ENCODE measurements at regions of chr7 and their contacts with region 1.

Region 1: DNA sequence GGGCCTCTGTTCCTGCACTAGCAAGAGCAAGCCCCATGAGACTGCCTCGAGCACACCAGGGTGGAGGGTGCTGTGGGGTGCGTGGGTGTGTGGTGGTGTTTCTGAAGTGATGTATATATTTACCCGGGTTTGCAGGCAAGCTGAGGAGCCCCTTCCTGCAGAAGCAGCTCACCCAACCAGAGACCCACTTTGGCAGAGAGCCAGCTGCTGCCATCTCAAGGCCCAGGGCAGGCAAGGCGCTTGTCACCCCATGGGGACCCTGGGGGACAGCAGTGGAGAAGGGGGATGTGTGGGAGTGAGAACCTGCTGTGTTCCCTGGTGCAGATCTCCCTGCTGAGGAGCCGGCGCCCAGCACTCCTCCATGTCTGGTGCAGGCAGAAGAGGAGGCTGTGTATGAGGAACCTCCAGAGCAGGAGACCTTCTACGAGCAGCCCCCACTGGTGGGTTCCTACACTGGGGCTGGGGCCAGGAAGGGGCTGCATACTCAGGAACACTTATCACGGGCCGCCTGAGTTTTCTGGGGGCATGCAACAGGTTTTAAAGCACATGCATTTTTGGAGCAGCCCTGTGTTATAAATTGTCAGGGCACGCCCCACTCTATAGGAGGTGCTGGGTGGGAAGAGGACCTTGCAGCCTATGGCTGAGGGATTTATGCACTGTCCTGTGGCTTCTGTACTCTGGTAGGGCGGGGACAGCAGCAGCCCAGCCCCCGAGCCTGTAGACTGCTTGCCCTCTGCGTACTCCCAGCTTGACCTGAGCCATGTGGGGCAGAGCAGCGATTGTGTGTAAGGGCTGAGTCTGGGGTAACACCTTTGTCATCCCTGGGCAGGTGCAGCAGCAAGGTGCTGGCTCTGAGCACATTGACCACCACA is 5.9 kb downstream of the PGAM2 start:
- DNase-seq: peak; percentile 16 to 62
- H3K4me3 ChIP-seq: no peak overlapping the region
- H3K27ac ChIP-seq: no peak overlapping the region
- H3K4me1 ChIP-seq: peaks cover 0 to 27% (median 21%) of the 10 kb centered on the region in 4 donors
- H3K27me3 ChIP-seq: no peaks in the 10 kb centered on the region
- CTCF ChIP-seq: no peak

Region 2: DNA sequence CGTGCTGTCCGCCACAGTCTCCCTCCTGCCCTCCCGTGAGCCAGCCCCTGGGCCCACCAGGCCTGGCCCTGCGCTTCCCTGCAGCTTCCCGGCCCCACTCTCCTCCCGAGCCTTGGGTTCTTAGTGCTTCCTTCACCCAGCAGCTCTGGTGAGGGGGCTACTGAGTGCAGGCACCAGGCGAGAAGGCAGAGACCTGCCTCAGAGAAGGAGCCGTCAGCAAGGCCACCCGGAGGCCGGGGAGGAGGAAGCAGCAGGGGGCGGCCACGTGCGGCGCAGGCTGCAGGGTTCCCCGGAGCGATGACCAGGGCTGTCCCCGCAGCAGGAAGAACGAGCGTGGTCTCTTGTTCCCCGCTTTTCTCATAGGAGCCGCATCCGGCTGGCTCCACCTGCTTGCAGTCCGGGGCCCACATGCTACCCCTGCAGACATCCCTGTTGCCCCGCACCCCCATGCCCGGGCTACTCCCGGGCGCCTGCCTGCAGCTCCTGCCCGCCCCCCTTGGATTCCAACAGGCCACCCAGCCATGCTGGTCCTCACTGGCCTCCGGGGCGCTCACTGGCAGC is 161.9 kb after region 1 on chr7:
- intact Hi-C with region 1: no loop called
- DNase-seq: no peak
- H3K4me3 ChIP-seq: no peak overlapping the region
- H3K27ac ChIP-seq: no peak overlapping the region
- H3K4me1 ChIP-seq: no peaks in the 10 kb centered on the region
- H3K27me3 ChIP-seq: peaks cover 0 to 48% of the 10 kb centered on the region in 2 donors
- CTCF ChIP-seq: no peak

Region 3: GRCh38 chr7:44324481-44325193 is 265.2 kb after region 1 on chr7:
- intact Hi-C with region 1: no loop called
- DNase-seq: no peak
- H3K4me3 ChIP-seq: peak overlapping the region; percentile 16 to 37
- H3K27ac ChIP-seq: no peak overlapping the region
- H3K4me1 ChIP-seq: peaks cover 0 to 14% (median 7%) of the 10 kb centered on the region in 4 donors
- H3K27me3 ChIP-seq: peaks cover 0 to 44% of the 10 kb centered on the region in 2 donors
- CTCF ChIP-seq: no peak

Region 4: DNA sequence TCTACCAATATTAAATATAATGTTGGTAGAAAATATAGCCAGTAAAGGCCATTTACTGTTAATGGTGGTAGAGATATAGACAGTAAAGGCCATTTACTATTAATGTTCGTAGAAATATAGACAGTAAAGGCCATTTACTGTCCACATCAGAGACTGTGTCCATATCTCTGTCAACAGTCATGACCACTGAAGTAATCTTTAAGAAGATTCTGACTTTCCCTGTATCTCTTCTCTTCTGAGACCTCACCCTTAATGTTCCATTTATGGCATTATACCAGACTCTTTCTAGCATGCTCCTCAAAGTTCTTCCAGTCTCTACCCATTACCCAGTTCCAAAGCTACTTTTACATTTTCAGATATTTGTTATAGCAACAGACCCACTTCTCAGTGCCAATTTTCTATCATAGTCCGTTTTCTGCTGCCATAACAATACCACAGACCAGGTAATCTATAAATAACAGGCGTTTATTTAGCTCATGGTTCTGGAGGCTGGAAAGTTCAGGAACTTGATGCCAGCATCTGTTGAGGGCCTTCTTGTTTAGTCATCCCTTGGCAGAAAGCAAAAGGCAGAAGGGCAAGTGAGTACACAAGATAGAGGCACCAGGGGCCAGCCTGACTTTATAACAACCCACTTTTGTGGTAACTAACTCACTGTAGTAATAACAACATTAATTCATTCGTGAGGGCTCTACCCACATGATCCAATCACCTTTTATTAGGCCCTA is 438.9 kb after region 1 on chr7:
- intact Hi-C with region 1: loop called (anchors 5 kb)
- DNase-seq: no peak
- H3K4me3 ChIP-seq: no peak overlapping the region
- H3K27ac ChIP-seq: no peak overlapping the region
- H3K4me1 ChIP-seq: no peaks in the 10 kb centered on the region
- H3K27me3 ChIP-seq: no peaks in the 10 kb centered on the region
- CTCF ChIP-seq: no peak